Thyroid gland (tissue), 4 donors: ENCODE measurements at regions of chr19 and their contacts with region 1.

Region 1: DNA sequence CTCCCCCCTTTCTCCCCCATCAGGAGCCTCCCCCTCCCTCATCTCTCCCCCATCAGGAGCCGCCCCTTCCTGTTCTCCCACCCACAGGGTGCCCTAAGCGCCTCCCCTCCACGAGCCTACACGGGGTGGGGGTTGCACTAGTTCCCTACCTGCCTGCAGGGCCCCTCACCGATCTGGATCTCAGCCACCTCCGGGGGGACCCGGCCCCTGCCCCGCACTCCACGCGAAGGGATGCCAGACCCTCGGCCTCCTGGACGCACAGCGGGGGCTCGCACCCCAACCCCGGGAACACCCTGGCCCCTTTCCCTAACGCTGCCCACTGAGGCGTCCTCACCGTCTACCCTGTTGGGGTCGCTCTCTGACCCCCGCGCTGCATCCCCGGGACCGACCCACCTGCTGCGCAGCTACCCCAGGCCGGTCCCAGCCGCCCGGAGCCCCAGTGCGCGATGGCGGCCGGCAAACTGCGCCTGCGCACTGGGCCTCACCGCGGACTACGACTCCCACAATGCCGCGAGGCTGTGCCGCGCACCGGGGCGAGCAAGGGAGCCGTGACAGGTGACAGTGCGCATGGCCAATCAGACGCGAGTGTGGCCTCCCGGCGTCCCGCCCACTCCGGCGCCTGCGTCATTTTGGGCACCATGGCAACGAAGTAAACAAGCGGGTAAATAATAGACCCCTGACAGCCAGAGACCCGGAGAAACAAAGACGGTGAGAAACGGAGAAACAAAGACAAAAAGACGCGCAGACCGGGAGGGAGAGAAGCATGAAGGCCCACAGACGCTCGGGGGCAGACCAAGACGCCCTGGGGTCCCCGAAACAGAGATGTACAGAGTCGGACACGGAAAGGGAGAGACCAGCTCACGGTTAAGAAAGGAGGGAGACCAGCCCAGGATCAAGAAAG is at the start of gene ZSCAN18:
- DNase-seq: peak; percentile 98 to 99
- H3K4me3 ChIP-seq: peak within 1 kb of the TSS; percentile 87 to 97 (median 96)
- H3K27ac ChIP-seq: peak within 1 kb of the TSS; percentile 94 to 98 (median 97)
- H3K4me1 ChIP-seq: peaks cover 12 to 19% of the 10 kb centered on the region in 2 donors
- H3K27me3 ChIP-seq: no peaks in the 10 kb centered on the region
- CTCF ChIP-seq: no peak
- POLR2A ChIP-seq: peak; percentile 44 to 85
- total RNA-seq, gene ZSCAN18: 129 to 150 (median 132) TPM

Region 2: DNA sequence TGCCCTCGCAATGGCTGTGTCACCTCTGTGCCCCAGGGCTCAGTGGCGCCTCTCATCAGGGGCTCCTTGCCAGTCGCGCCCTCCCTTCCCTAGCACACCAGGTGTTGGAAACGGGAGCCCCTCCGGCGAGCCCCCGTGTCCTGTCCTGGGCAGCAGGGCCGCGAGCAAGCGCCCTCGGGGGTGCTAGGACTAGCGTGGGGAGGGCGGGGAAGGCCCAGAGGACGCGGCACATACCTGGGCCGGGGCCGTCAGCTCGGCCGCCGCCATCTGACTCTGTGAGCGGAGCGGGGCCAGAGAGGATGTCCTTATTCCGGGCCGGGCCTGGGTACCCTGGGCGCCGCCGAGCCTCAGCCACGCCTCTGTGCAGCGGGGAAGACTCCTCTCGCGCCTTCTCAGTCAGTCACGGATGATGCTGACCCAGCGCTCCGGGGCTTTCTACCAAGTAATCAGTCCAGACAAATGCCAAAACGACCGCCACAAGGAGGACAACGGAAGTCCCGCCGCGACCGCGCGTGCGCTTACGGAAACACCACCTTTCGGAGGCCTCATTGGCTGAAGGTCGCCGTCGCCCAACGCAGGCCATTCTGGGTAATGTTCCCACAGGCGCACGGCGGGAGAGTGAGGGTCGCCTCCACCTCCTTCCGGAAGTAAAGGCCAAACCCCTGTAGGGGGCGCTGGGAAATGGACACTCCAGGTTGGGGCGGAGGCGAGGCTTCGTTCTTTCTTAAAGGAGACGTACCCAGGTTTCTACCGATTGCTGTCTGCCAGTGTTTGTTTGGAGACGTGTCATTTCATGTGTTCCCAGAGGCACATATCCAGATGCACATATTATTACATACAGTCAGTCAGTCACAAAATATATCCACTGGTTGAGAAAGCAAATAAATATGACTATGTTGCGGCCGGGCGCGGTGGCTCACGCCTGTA is 150.6 kb before region 1 on chr19 and contains the start of gene ZNF256:
- intact Hi-C with region 1: no loop called
- DNase-seq: peak; percentile 98 to 99
- H3K4me3 ChIP-seq: peak within 1 kb of the TSS; percentile 77 to 92 (median 91)
- H3K27ac ChIP-seq: peak within 1 kb of the TSS; percentile 20 to 55 (median 36)
- H3K4me1 ChIP-seq: peaks cover 11% of the 10 kb centered on the region in 2 donors
- H3K27me3 ChIP-seq: no peaks in the 10 kb centered on the region
- CTCF ChIP-seq: peak in 5 of 6 experiments; percentile 23 to 78 (median 66)
- POLR2A ChIP-seq: no peak
- total RNA-seq, gene ZNF256: 5.7 to 11.1 (median 6.3) TPM

Region 3: DNA sequence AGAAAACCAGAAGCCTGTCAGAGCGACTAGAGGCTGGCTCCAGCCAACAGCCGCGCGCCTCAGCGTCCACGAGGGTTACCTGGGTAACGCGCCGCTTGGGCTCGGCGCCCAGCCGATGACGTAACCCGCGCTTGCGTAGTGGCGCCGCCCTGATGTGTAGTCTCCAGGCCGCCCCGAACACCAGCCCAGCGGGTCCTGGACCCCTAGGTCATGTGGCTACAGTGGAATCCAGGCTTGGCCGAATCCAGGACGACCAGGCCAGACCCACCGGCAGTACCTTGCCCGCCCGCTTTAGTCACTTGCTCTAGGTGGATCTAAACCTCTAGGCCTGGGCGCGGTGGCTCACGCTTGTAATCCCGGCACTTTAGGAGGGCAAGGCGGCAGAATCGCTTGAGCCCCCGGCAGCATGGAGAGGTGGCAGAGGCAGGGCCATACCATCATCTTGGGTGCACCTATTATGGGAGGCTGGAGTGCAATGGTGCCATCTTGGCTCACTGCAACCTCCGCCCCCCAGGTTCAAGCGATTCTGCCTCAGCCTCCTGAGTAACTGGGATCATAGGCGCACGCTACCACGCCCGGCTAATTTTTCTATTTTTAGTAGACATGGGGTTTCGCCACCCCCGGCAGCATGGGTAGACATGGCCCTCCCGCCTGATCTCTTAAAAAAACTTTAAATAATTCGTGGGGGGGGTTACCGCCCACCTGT is 88.2 kb before region 1 on chr19:
- intact Hi-C with region 1: loop called (anchors 5 kb)
- DNase-seq: peak; percentile 93 to 95
- H3K4me3 ChIP-seq: peak overlapping the region in 1 of 3 donors; percentile 32
- H3K27ac ChIP-seq: peak overlapping the region in 2 of 3 donors; percentile 53 to 65
- H3K4me1 ChIP-seq: peaks cover 0 to 11% of the 10 kb centered on the region in 2 donors
- H3K27me3 ChIP-seq: no peaks in the 10 kb centered on the region
- CTCF ChIP-seq: peak in 1 of 6 experiments; percentile 29
- POLR2A ChIP-seq: peak; percentile 44 to 46

Region 4: DNA sequence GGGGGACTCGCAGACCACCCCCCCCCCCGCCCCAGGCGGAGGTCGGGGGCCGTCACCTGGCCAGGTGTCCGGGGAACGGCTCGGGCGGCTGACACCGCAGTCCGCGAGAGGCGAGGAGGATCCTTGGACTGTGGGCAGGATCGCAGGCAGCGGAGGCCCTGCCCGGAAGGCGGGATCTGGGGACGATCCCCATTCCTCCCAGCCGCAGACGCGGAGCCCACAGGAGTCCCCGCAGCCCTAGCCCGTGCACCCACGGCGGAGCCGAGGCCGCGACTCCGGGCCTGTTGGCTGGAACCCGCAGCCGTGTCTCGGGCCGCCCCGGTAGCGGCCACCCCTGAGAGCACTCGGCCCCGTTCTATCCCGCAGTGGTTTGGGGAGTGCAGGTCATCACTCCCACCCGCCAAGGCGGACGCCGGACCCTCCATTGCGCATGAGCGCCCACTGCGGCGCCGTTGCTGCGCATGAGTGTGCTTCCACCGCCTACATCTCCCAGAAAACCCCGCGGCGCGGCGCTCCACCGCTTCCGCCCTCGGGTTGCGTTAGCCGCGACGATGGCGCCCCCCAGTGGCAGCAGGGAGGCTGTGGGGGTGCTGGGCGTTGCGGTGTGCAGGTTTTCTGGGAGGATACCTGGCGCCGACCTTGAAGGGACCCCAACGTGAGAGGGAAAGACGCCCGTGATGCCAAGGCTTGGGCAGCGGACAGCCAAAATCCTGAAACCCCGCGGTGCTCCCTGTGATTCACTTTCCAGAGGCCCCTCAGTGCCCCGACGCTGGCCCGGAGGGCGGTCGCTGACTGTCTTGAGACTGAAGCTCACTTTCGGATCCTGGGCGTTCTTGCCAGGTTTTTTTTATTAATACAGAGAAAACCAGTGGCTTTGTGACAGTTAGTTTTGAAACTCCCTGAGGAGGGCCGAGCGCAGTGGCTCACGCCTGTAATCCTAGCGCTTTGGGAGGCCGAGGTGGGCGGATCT is 56.9 kb after region 1 on chr19:
- intact Hi-C with region 1: loop called (anchors 5 kb)
- DNase-seq: peak; percentile 97 to 98
- H3K4me3 ChIP-seq: peak overlapping the region; percentile 82 to 98 (median 92)
- H3K27ac ChIP-seq: peak overlapping the region; percentile 96 to 99 (median 97)
- H3K4me1 ChIP-seq: peaks cover 15 to 30% of the 10 kb centered on the region in 2 donors
- H3K27me3 ChIP-seq: no peaks in the 10 kb centered on the region
- CTCF ChIP-seq: peak; percentile 82 to 100 (median 96)
- POLR2A ChIP-seq: peak; percentile 18 to 89